CD4-positive, alpha-beta T cell (primary cell): ENCODE measurements at regions of chr11 and their contacts with region 1.

Region 1: GRCh38 chr11:66616379-66617154 is at the start of gene RBM14:
- DNase-seq: peak; percentile 95 to 100 (median 97)
- ATAC-seq: peak; percentile 81
- H3K4me3 ChIP-seq: peak within 1 kb of the TSS; percentile 99
- H3K4me3 Mint-ChIP-seq: peak within 1 kb of the TSS; percentile 99
- H3K27ac ChIP-seq: peak within 1 kb of the TSS; percentile 96 to 98
- H3K27ac Mint-ChIP-seq: peak within 1 kb of the TSS; percentile 94
- H3K4me1 ChIP-seq: peaks cover 50% of the 10 kb centered on the region
- H3K4me1 Mint-ChIP-seq: peaks cover 53% of the 10 kb centered on the region
- H3K27me3 ChIP-seq: no peaks in the 10 kb centered on the region
- H3K27me3 Mint-ChIP-seq: no peaks in the 10 kb centered on the region
- CTCF ChIP-seq: no peak
- total RNA-seq, gene RBM14: 239 to 250 TPM

Region 2: DNA sequence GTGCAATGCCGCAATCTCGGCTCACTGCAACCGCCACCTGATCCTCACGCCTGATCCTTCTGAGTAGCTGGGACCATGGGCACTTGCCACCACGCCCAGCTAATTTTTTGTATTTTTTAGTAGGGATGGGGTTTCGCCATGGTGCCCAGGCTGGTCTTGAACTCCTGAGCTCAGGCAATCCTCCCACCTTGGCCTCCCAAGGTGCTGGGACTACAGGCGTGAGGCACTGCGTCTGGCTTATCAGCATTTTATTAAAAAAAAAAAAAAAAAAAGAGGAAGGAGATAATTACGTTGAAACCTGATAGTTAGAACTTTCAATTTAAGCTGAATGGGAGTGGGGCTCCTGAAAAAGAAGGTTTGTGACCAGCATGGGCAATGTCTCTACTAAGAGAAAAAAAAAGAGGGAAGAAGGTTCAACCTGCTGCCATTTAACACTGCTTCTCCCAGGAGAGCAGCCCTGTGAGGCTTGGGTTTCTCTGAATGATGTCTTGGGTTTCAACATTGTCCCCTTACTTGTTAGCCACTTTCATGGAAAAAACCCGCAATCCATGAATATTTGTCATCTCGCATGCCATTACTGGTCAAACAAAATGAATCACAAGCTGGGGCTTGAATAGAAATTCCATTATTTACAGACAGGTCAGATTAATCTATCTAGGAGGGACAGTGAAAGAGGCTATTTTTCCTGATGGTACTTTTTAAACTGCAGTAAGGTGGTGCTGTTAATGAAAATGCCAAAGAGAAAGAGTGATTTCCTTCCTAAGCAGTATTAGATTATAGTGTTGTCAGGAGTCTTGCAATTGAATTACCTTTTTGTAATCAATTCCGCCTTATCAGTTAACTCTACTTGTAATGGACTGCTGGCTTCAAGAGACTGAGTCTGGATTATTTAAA is 473.9 kb before region 1 on chr11:
- CTCF ChIA-PET with region 1: no interaction called
- POLR2A ChIA-PET with region 1: no interaction called
- intact Hi-C with region 1: no loop called
- DNase-seq: no peak
- ATAC-seq: no peak
- H3K4me3 ChIP-seq: no peak overlapping the region
- H3K4me3 Mint-ChIP-seq: no peak overlapping the region
- H3K27ac ChIP-seq: no peak overlapping the region
- H3K27ac Mint-ChIP-seq: no peak overlapping the region
- H3K4me1 ChIP-seq: peaks cover 16% of the 10 kb centered on the region
- H3K4me1 Mint-ChIP-seq: peaks cover 60% of the 10 kb centered on the region
- H3K27me3 ChIP-seq: no peaks in the 10 kb centered on the region
- H3K27me3 Mint-ChIP-seq: no peaks in the 10 kb centered on the region
- CTCF ChIP-seq: no peak

Region 3: GRCh38 chr11:66480117-66480938 is 136.2 kb before region 1 on chr11 and contains the start of gene DPP3:
- CTCF ChIA-PET with region 1: no interaction called
- POLR2A ChIA-PET with region 1: interaction called, 10 read pairs
- intact Hi-C with region 1: no loop called
- DNase-seq: peak; percentile 91 to 97 (median 95)
- ATAC-seq: peak; percentile 98
- H3K4me3 ChIP-seq: peak within 1 kb of the TSS; percentile 79
- H3K4me3 Mint-ChIP-seq: peak within 1 kb of the TSS; percentile 91
- H3K27ac ChIP-seq: peak within 1 kb of the TSS; percentile 70 to 79
- H3K27ac Mint-ChIP-seq: peak within 1 kb of the TSS; percentile 83
- H3K4me1 ChIP-seq: peaks cover 29% of the 10 kb centered on the region
- H3K4me1 Mint-ChIP-seq: peaks cover 24% of the 10 kb centered on the region
- H3K27me3 ChIP-seq: no peaks in the 10 kb centered on the region
- H3K27me3 Mint-ChIP-seq: no peaks in the 10 kb centered on the region
- CTCF ChIP-seq: no peak
- total RNA-seq, gene DPP3: 16.9 to 17.7 TPM

Region 4: GRCh38 chr11:66568124-66568916 is 48.2 kb before region 1 on chr11 and contains the start of gene CTSF:
- CTCF ChIA-PET with region 1: no interaction called
- POLR2A ChIA-PET with region 1: interaction called, 12 read pairs
- intact Hi-C with region 1: no loop called
- DNase-seq: peak; percentile 50 to 82 (median 65)
- ATAC-seq: peak; percentile 93
- H3K4me3 ChIP-seq: peak within 1 kb of the TSS; percentile 46
- H3K4me3 Mint-ChIP-seq: peak within 1 kb of the TSS; percentile 77
- H3K27ac ChIP-seq: no peak within 1 kb of the TSS
- H3K27ac Mint-ChIP-seq: no peak within 1 kb of the TSS
- H3K4me1 ChIP-seq: peaks cover 12% of the 10 kb centered on the region
- H3K4me1 Mint-ChIP-seq: no peaks in the 10 kb centered on the region
- H3K27me3 ChIP-seq: no peaks in the 10 kb centered on the region
- H3K27me3 Mint-ChIP-seq: peaks cover 7% of the 10 kb centered on the region
- CTCF ChIP-seq: no peak
- total RNA-seq, gene CTSF: 16.0 to 16.8 TPM

Region 5: GRCh38 chr11:66651016-66651415 is 34.4 kb after region 1 on chr11:
- CTCF ChIA-PET with region 1: no interaction called
- POLR2A ChIA-PET with region 1: interaction called, 511 read pairs
- intact Hi-C with region 1: no loop called
- DNase-seq: peak in 2 of 14 experiments; percentile 35 to 49
- ATAC-seq: no peak
- H3K4me3 ChIP-seq: no peak overlapping the region
- H3K4me3 Mint-ChIP-seq: no peak overlapping the region
- H3K27ac ChIP-seq: no peak overlapping the region
- H3K27ac Mint-ChIP-seq: peak overlapping the region; percentile 64
- H3K4me1 ChIP-seq: peaks cover 38% of the 10 kb centered on the region
- H3K4me1 Mint-ChIP-seq: peaks cover 65% of the 10 kb centered on the region
- H3K27me3 ChIP-seq: no peaks in the 10 kb centered on the region
- H3K27me3 Mint-ChIP-seq: no peaks in the 10 kb centered on the region
- CTCF ChIP-seq: no peak

Region 6: DNA sequence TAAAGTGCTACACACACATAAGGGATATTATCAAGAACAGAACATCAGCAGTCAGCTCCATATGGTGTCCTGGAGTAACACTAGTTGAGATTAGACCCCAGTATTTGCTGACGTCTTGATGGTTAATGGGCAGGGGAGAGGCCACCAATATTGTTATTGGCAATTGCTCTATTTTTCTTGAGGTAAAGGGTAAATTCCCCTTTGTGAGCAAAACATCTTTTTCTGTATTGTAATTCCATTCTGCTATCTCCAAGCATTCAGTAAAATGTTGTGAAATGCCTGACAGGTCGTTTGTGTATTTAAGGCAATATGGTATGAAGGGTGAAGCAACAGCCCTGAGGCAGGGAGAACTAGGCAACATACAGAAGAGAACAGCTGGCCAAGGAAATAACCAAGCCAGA is 319.7 kb after region 1 on chr11:
- CTCF ChIA-PET with region 1: no interaction called
- POLR2A ChIA-PET with region 1: no interaction called
- intact Hi-C with region 1: no loop called
- DNase-seq: no peak
- ATAC-seq: no peak
- H3K4me3 ChIP-seq: no peak overlapping the region
- H3K4me3 Mint-ChIP-seq: no peak overlapping the region
- H3K27ac ChIP-seq: no peak overlapping the region
- H3K27ac Mint-ChIP-seq: no peak overlapping the region
- H3K4me1 ChIP-seq: no peaks in the 10 kb centered on the region
- H3K4me1 Mint-ChIP-seq: no peaks in the 10 kb centered on the region
- H3K27me3 ChIP-seq: no peaks in the 10 kb centered on the region
- H3K27me3 Mint-ChIP-seq: no peaks in the 10 kb centered on the region
- CTCF ChIP-seq: no peak